ENCODE measurements at regions of chr12 and their contacts with region 1.

Region 1: GRCh38 chr12:77049767-77050353 is 15.5 kb downstream of the E2F7 start:
- DNase-seq: peak; percentile 11
- H3K4me3 Mint-ChIP-seq: no peak overlapping the region
- H3K27ac Mint-ChIP-seq: no peak overlapping the region
- H3K4me1 Mint-ChIP-seq: peaks cover 9% of the 10 kb centered on the region
- H3K27me3 Mint-ChIP-seq: no peaks in the 10 kb centered on the region

Region 2: GRCh38 chr12:77031745-77032144 is 18.1 kb before region 1 on chr12:
- intact Hi-C with region 1: no loop called
- DNase-seq: no peak
- H3K4me3 Mint-ChIP-seq: no peak overlapping the region
- H3K27ac Mint-ChIP-seq: no peak overlapping the region
- H3K4me1 Mint-ChIP-seq: no peaks in the 10 kb centered on the region
- H3K27me3 Mint-ChIP-seq: no peaks in the 10 kb centered on the region

Region 3: DNA sequence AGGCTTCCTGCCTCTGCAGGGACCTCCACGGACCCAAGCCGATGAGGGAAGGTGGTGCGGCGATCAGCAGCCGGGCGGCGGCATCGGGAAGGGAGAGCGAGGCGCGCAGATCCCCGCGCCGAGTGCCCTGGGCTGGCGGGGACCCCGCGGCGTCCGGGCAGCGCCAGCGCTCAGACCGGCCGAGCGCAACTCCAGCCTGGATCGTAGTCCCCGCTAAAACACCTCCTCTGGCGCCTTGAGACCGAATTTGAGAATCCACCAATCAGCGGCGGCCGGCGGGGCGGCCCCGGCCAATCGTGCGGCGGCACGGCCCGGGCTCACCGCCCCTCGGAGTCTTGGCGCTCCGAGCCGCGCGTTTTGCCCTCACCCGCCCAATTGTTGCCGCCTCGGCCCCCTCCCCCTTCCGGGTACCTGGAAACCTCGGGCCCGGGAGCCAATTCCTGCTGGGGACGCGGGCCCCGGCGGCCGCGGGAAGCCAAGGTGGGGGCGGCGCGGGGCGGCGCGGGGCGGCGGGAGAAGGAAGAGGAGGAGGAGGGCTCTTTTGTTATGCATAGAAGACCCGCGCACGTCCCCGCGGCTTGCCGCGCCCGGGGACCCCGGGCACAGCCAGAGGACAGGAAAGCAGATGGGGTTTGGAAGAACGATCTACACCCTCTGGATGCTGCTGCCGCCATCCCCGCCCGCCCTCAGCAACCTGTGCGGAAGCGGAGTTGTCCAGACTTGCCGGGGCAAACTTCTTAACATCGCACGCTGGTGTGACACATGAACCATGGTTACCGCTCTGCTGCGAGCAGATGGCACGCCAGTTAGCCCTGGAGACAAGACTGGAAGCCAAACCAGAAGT is 15.7 kb after region 1 on chr12 and contains the start of gene E2F7:
- intact Hi-C with region 1: loop called (anchors 1 kb)
- DNase-seq: peak; percentile 87
- H3K4me3 Mint-ChIP-seq: peak within 1 kb of the TSS; percentile 94
- H3K27ac Mint-ChIP-seq: peak within 1 kb of the TSS; percentile 73
- H3K4me1 Mint-ChIP-seq: peaks cover 42% of the 10 kb centered on the region
- H3K27me3 Mint-ChIP-seq: peaks cover 12% of the 10 kb centered on the region
- total RNA-seq, gene E2F7: 16.6 and 16.9 TPM in 2 replicates

Region 4: DNA sequence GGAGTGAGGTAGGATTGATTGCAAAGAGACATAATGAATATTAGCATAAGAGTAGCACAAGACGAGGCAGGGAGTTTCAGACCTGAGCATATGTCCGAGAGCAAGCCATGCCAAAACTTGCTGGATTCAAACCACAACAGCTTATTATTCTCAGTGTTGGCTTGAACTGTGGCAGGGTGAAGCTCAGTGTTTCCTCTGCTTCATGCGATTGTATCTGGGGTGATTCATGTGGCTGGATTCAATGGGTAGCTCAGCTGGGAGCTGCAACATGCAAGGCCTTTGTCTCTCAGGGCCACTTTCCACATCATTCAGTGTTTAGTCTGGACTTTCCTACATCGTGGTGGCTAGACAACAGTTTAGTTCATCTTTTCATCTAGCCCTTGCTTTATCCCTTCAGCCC is 37.6 kb after region 1 on chr12:
- intact Hi-C with region 1: no loop called
- DNase-seq: no peak
- H3K4me3 Mint-ChIP-seq: no peak overlapping the region
- H3K27ac Mint-ChIP-seq: no peak overlapping the region
- H3K4me1 Mint-ChIP-seq: no peaks in the 10 kb centered on the region
- H3K27me3 Mint-ChIP-seq: no peaks in the 10 kb centered on the region

Region 5: GRCh38 chr12:77685112-77685511 is 635.3 kb after region 1 on chr12:
- intact Hi-C with region 1: loop called (anchors 5 kb)
- DNase-seq: no peak
- H3K4me3 Mint-ChIP-seq: no peak overlapping the region
- H3K27ac Mint-ChIP-seq: no peak overlapping the region
- H3K4me1 Mint-ChIP-seq: no peaks in the 10 kb centered on the region
- H3K27me3 Mint-ChIP-seq: no peaks in the 10 kb centered on the region

Region 6: GRCh38 chr12:77925536-77926108 is 875.8 kb after region 1 on chr12:
- intact Hi-C with region 1: loop called (anchors 5 kb)
- DNase-seq: peak; percentile 1
- H3K4me3 Mint-ChIP-seq: no peak overlapping the region
- H3K27ac Mint-ChIP-seq: no peak overlapping the region
- H3K4me1 Mint-ChIP-seq: no peaks in the 10 kb centered on the region
- H3K27me3 Mint-ChIP-seq: no peaks in the 10 kb centered on the region

Measured in activated T-helper 1 cell treated with anti-CD3 and anti-CD28 coated beads, Interleukin-12 subunit alpha, Interleukin-12 subunit beta, Interleukin-2, Interleukin-4 antibody, amounts not matched to agents 30 ng/mL and 10 ng/mL and 1 ng/mL, durations not matched to agents 14 hours and 24 hours and 36 hours (primary cell).